IMR-90 (cell line): ENCODE measurements at regions of chr1 and their contacts with region 1.

Region 1: GRCh38 chr1:88973520-88974137 is 18.8 kb downstream of the KYAT3 start:
- DNase-seq: peak; percentile 54
- ATAC-seq: peak; percentile 77
- H3K4me3 ChIP-seq: no peak overlapping the region
- H3K27ac ChIP-seq: no peak overlapping the region
- H3K4me1 ChIP-seq: no peaks in the 10 kb centered on the region
- H3K27me3 ChIP-seq: no peaks in the 10 kb centered on the region
- CTCF ChIP-seq: peak; percentile 61
- POLR2A ChIP-seq: no peak
- RAD21 ChIP-seq: peak; percentile 63

Region 2: GRCh38 chr1:89274411-89274857 is 300.8 kb after region 1 on chr1:
- CTCF ChIA-PET with region 1: no interaction called
- POLR2A ChIA-PET with region 1: no interaction called
- dilution Hi-C with region 1: no loop called
- in situ Hi-C with region 1: no loop called
- intact Hi-C with region 1: no loop called
- DNase-seq: peak; percentile 8
- ATAC-seq: no peak
- H3K4me3 ChIP-seq: no peak overlapping the region
- H3K27ac ChIP-seq: no peak overlapping the region
- H3K4me1 ChIP-seq: no peaks in the 10 kb centered on the region
- H3K27me3 ChIP-seq: no peaks in the 10 kb centered on the region
- CTCF ChIP-seq: no peak
- POLR2A ChIP-seq: no peak
- RAD21 ChIP-seq: no peak

Region 3: DNA sequence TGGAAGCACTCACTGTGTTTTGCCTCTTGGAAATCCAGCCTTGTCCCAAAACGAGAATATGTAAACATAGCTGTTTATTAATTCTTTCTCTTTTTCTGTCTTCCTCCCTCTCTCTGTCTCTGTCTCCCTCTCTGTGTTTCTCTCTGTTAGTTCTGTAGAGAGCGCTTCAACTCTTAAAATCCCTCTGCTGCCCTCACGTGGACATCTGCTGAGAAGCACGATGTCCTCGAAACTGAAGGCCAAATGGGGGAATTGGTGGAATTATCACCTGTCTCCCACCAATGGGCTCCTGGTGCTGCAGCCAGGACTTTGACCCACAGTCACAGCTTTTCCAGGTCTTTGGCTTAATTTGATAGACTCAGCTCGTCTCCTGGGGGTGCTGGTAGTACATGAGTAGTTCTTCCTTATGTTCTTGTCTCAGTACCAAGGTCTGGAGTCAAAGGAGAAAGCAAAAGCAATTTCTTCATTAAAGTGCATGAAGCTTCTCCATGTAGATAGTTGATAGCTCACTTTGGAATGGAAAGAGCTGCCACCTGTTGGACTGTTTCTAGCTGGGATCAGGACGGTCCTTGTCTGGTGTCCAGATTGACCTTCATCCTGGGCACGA is 384.8 kb after region 1 on chr1:
- CTCF ChIA-PET with region 1: no interaction called
- POLR2A ChIA-PET with region 1: no interaction called
- dilution Hi-C with region 1: no loop called
- in situ Hi-C with region 1: no loop called
- intact Hi-C with region 1: loop called (anchors 2 kb)
- DNase-seq: peak; percentile 65
- ATAC-seq: peak; percentile 96
- H3K4me3 ChIP-seq: no peak overlapping the region
- H3K27ac ChIP-seq: no peak overlapping the region
- H3K4me1 ChIP-seq: no peaks in the 10 kb centered on the region
- H3K27me3 ChIP-seq: peaks cover 2% of the 10 kb centered on the region; the same call in 1 of the 2 replicates
- CTCF ChIP-seq: peak; percentile 78
- POLR2A ChIP-seq: no peak
- RAD21 ChIP-seq: peak; percentile 74